GM10248 (cell line): ENCODE measurements at regions of chr20 and their contacts with region 1.

Region 1: GRCh38 chr20:4813863-4814695 is 92.4 kb downstream of the PRND start:
- DNase-seq: peak; percentile 79
- CTCF ChIP-seq: no peak

Region 2: GRCh38 chr20:4795394-4795793 is 18.7 kb before region 1 on chr20:
- CTCF ChIA-PET with region 1: interaction called, 14 read pairs
- POLR2A ChIA-PET with region 1: no interaction called
- DNase-seq: peak; percentile 54
- CTCF ChIP-seq: no peak

Region 3: GRCh38 chr20:4944518-4945313 is 130.6 kb after region 1 on chr20:
- CTCF ChIA-PET with region 1: no interaction called
- POLR2A ChIA-PET with region 1: no interaction called
- DNase-seq: no peak
- CTCF ChIP-seq: no peak